CD8-positive, alpha-beta T cell (primary cell): ENCODE measurements at regions of chr7 and their contacts with region 1.

Region 1: DNA sequence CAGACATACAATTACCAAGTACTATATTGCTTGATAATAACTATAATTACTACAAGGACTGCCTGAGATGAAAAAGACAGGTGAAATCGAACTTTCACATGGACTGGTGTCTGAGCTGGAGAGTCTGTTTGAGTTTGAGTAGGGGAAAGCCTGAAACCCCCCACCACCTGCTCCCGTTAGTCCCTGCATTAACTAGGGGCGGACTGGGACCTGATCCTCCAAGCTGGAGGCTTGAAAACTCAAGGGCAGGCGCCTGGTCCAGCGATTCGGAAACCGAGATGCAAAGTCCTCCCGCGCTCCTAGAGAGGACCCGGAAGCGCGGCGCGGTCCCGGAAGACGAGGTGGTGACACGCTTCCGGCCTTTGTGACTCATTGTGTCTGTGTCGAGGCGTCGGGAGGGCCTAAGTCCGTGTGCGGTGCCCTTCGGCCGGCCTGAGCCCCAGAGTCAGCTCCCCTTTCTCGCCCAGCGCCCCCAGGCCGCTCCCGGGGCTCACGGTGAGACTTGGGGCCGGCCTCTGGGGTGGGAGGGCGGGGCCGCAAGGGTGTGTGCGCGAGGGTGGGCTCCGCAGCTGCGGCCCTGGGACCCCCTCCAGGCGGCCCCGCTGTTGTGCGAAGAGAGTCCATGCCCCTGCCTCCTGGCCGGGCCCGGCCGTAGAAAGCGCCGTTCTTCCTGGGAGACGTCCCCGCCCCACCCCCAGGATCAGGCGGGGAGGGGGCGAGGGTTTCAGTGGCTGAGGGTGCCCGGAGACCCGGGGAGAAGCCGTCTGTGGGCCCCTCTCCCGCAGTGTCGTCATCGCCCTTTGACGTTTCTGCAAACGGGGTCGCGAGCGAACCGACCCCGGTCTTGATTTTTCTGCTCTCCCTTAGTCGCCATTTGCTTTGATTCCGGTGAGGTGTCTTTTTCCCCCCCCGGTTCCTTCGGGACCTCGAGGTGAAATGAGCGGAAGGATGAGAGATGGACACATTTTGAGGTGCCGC is at the start of gene ZKSCAN1:
- DNase-seq: peak; percentile 67 to 95 (median 83)
- ATAC-seq: peak; percentile 91
- H3K4me3 ChIP-seq: peak within 1 kb of the TSS; percentile 61 to 100
- H3K4me3 Mint-ChIP-seq: peak within 1 kb of the TSS; percentile 95
- H3K27ac ChIP-seq: peak within 1 kb of the TSS; percentile 82 to 97
- H3K27ac Mint-ChIP-seq: peak within 1 kb of the TSS; percentile 98
- H3K4me1 ChIP-seq: peaks cover 22% of the 10 kb centered on the region
- H3K4me1 Mint-ChIP-seq: peaks cover 52% of the 10 kb centered on the region
- H3K27me3 ChIP-seq: no peaks in the 10 kb centered on the region
- H3K27me3 Mint-ChIP-seq: no peaks in the 10 kb centered on the region
- CTCF ChIP-seq: no peak
- total RNA-seq, gene ZKSCAN1: 30.0 to 35.9 TPM

Region 2: GRCh38 chr7:99616359-99617191 is 398.9 kb before region 1 on chr7 and contains the start of gene ZSCAN25:
- CTCF ChIA-PET with region 1: no interaction called
- POLR2A ChIA-PET with region 1: no interaction called
- intact Hi-C with region 1: loop called in 1 of 2 experiments (anchors 2 kb)
- DNase-seq: peak; percentile 66 to 93 (median 86)
- ATAC-seq: peak; percentile 97
- H3K4me3 ChIP-seq: peak within 1 kb of the TSS; percentile 78 to 94
- H3K4me3 Mint-ChIP-seq: peak within 1 kb of the TSS; percentile 97
- H3K27ac ChIP-seq: peak within 1 kb of the TSS; percentile 86 to 87
- H3K27ac Mint-ChIP-seq: peak within 1 kb of the TSS; percentile 98
- H3K4me1 ChIP-seq: peaks cover 25% of the 10 kb centered on the region
- H3K4me1 Mint-ChIP-seq: peaks cover 45% of the 10 kb centered on the region
- H3K27me3 ChIP-seq: no peaks in the 10 kb centered on the region
- H3K27me3 Mint-ChIP-seq: no peaks in the 10 kb centered on the region
- CTCF ChIP-seq: no peak
- total RNA-seq, gene ZSCAN25: 54.1 to 54.7 TPM

Region 3: GRCh38 chr7:99997545-99998137 is 17.9 kb before region 1 on chr7:
- CTCF ChIA-PET with region 1: interaction called, 6 read pairs
- POLR2A ChIA-PET with region 1: interaction called, 20 read pairs
- intact Hi-C with region 1: loop called (anchors 1 kb)
- DNase-seq: peak; percentile 51 to 91 (median 74)
- ATAC-seq: peak; percentile 88
- H3K4me3 ChIP-seq: peak overlapping the region; percentile 48 to 54
- H3K4me3 Mint-ChIP-seq: peak overlapping the region; percentile 73
- H3K27ac ChIP-seq: peak overlapping the region; percentile 64 to 82
- H3K27ac Mint-ChIP-seq: peak overlapping the region; percentile 92
- H3K4me1 ChIP-seq: peaks cover 12% of the 10 kb centered on the region
- H3K4me1 Mint-ChIP-seq: peaks cover 11% of the 10 kb centered on the region
- H3K27me3 ChIP-seq: no peaks in the 10 kb centered on the region
- H3K27me3 Mint-ChIP-seq: no peaks in the 10 kb centered on the region
- CTCF ChIP-seq: no peak

Region 4: DNA sequence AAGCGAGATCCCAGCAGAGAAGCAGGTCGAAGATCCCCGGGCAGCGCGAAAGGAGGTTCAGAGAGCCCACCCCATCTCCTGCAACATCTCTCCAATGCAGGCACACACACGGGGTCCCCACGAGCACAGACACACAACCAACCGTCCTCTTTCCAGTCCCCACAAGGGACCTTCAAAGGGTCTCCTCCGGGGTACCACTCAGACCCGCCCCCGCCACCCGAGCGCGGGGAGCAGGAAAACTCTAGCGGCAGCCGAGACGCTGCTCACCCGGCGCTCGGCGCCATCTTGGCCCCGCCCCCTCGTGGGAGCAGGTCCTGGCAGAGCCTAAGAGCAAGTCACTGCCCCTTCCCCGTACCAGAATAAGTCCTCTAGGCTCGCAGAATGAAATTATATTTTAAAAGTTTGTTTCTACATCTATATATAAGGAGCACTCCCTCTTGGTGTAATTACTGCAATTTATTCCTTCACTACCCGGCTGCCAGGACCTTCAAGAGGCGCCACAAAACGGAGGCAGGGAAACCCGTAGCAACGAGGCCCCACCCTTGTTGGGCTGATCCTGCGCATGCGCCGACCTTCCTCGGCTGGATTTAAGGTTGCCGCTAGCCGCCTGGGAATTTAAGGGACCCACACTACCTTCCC is 103.7 kb after region 1 on chr7 and contains the starts of genes CNPY4 and TAF6:
- CTCF ChIA-PET with region 1: no interaction called
- POLR2A ChIA-PET with region 1: interaction called, 3 read pairs
- intact Hi-C with region 1: loop called in 1 of 2 experiments (anchors 1 kb)
- DNase-seq: peak; percentile 86 to 97 (median 96)
- ATAC-seq: peak; percentile 69
- H3K4me3 ChIP-seq: peak within 1 kb of the TSS; percentile 80 to 93
- H3K4me3 Mint-ChIP-seq: peak within 1 kb of the TSS; percentile 99
- H3K27ac ChIP-seq: peak within 1 kb of the TSS; percentile 88 to 93
- H3K27ac Mint-ChIP-seq: peak within 1 kb of the TSS; percentile 93
- H3K4me1 ChIP-seq: peaks cover 17% of the 10 kb centered on the region
- H3K4me1 Mint-ChIP-seq: peaks cover 28% of the 10 kb centered on the region
- H3K27me3 ChIP-seq: no peaks in the 10 kb centered on the region
- H3K27me3 Mint-ChIP-seq: no peaks in the 10 kb centered on the region
- CTCF ChIP-seq: no peak
- total RNA-seq, gene CNPY4: 21.4 to 24.4 TPM
- total RNA-seq, gene TAF6: 24.9 to 31.6 TPM

Region 5: GRCh38 chr7:100837099-100837836 is 821.7 kb after region 1 on chr7:
- CTCF ChIA-PET with region 1: no interaction called
- POLR2A ChIA-PET with region 1: no interaction called
- intact Hi-C with region 1: loop called in 1 of 2 experiments (anchors 10 kb)
- DNase-seq: peak; percentile 54 to 88 (median 78)
- ATAC-seq: peak; percentile 95
- H3K4me3 ChIP-seq: peak overlapping the region; percentile 50 to 64
- H3K4me3 Mint-ChIP-seq: peak overlapping the region; percentile 82
- H3K27ac ChIP-seq: peak overlapping the region; percentile 22 to 30
- H3K27ac Mint-ChIP-seq: peak overlapping the region; percentile 74
- H3K4me1 ChIP-seq: peaks cover 4% of the 10 kb centered on the region
- H3K4me1 Mint-ChIP-seq: peaks cover 8% of the 10 kb centered on the region
- H3K27me3 ChIP-seq: no peaks in the 10 kb centered on the region
- H3K27me3 Mint-ChIP-seq: no peaks in the 10 kb centered on the region
- CTCF ChIP-seq: no peak